WTC11 (cell line): ENCODE measurements at regions of chr1 and their contacts with region 1.

Region 1: GRCh38 chr1:94202241-94202640 is 35.1 kb downstream of the ARHGAP29 start:
- DNase-seq: no peak
- ATAC-seq: no peak
- H3K4me3 Mint-ChIP-seq: no peak overlapping the region
- H3K27ac Mint-ChIP-seq: no peak overlapping the region
- H3K4me1 Mint-ChIP-seq: peaks cover 6% of the 10 kb centered on the region
- H3K27me3 Mint-ChIP-seq: no peaks in the 10 kb centered on the region
- CTCF ChIP-seq: no peak

Region 2: GRCh38 chr1:94095112-94095637 is 107.1 kb before region 1 on chr1:
- CTCF ChIA-PET with region 1: no interaction called
- POLR2A ChIA-PET with region 1: no interaction called
- DNase-seq: no peak
- ATAC-seq: no peak
- H3K4me3 Mint-ChIP-seq: no peak overlapping the region
- H3K27ac Mint-ChIP-seq: no peak overlapping the region
- H3K4me1 Mint-ChIP-seq: peaks cover 49% of the 10 kb centered on the region
- H3K27me3 Mint-ChIP-seq: peaks cover 4% of the 10 kb centered on the region; the same call in 1 of the 2 replicates
- CTCF ChIP-seq: no peak

Region 3: GRCh38 chr1:94180650-94181049 is 21.6 kb before region 1 on chr1:
- CTCF ChIA-PET with region 1: no interaction called
- POLR2A ChIA-PET with region 1: no interaction called
- DNase-seq: no peak
- ATAC-seq: no peak
- H3K4me3 Mint-ChIP-seq: no peak overlapping the region
- H3K27ac Mint-ChIP-seq: no peak overlapping the region
- H3K4me1 Mint-ChIP-seq: no peaks in the 10 kb centered on the region
- H3K27me3 Mint-ChIP-seq: no peaks in the 10 kb centered on the region
- CTCF ChIP-seq: no peak

Region 4: GRCh38 chr1:94237291-94238226 is 35.3 kb after region 1 on chr1 and contains the start of gene ARHGAP29:
- CTCF ChIA-PET with region 1: no interaction called
- POLR2A ChIA-PET with region 1: interaction called, 11 read pairs
- DNase-seq: peak; percentile 92
- ATAC-seq: peak; percentile 89
- H3K4me3 Mint-ChIP-seq: peak within 1 kb of the TSS; percentile 79
- H3K27ac Mint-ChIP-seq: peak within 1 kb of the TSS; percentile 41; the same call in 1 of the 2 replicates
- H3K4me1 Mint-ChIP-seq: peaks cover 24% of the 10 kb centered on the region
- H3K27me3 Mint-ChIP-seq: peaks cover 65% of the 10 kb centered on the region
- CTCF ChIP-seq: no peak
- total RNA-seq, gene ARHGAP29: 3.5 to 6.6 TPM (median 4.4 TPM) in 3 replicates